ENCODE measurements at regions of chr19 and their contacts with region 1.

Region 1: GRCh38 chr19:17226002-17226933 is at the start of gene OCEL1:
- DNase-seq: peak; percentile 98
- ATAC-seq: peak; percentile 95
- H3K4me3 ChIP-seq: peak within 1 kb of the TSS; percentile 83
- H3K27ac ChIP-seq: peak within 1 kb of the TSS; percentile 59
- H3K4me1 ChIP-seq: no peaks in the 10 kb centered on the region; the same call in 1 of the 2 replicates
- H3K27me3 ChIP-seq: no peaks in the 10 kb centered on the region
- CTCF ChIP-seq: no peak
- total RNA-seq, gene OCEL1: 5.6 and 9.4 TPM in 2 replicates

Region 2: DNA sequence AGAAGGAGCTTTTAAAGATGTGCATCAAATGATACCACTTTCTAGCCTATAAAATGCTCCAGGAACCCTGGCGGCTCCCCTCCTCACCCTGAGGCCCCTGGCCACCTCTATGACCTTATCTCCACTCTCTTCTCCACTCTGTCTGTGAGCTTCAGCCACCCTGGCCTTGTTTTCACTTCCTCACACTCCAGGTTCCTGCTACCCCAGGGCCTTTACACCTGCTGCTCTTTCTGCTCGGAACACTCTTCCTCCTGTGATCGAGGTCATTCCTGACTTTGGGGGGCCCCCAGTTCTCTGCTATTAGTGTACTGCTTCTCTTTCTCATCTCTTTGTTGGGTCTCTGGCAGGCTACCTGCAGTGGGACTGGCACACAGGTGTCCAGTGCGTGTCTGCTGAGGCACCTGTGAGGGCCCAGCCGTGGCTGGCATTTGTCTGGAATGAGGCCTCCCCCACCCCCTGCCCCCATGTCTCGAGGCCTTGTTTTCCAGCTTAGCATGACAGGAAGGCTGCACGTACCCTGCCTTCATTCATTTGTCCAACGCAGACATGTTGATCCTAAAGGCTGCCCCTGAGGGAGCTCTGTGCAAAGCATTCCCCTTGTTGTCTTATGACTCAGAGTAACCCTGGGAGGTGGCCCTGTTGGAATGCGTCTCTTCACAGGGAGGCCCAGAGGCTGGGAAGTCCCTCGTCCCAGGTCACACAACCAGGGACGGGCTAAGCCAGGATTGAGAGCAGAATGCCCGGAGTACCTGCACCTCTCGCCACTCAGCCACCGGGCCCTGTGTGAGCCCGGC is 85.4 kb after region 1 on chr19:
- CTCF ChIA-PET with region 1: no interaction called
- POLR2A ChIA-PET with region 1: interaction called, 12 read pairs
- intact Hi-C with region 1: no loop called
- DNase-seq: peak; percentile 82
- ATAC-seq: peak; percentile 61
- H3K4me3 ChIP-seq: peak overlapping the region; percentile 40; the same call in 1 of the 2 replicates
- H3K27ac ChIP-seq: peak overlapping the region; percentile 76
- H3K4me1 ChIP-seq: peaks cover 37% of the 10 kb centered on the region
- H3K27me3 ChIP-seq: no peaks in the 10 kb centered on the region
- CTCF ChIP-seq: no peak

Region 3: DNA sequence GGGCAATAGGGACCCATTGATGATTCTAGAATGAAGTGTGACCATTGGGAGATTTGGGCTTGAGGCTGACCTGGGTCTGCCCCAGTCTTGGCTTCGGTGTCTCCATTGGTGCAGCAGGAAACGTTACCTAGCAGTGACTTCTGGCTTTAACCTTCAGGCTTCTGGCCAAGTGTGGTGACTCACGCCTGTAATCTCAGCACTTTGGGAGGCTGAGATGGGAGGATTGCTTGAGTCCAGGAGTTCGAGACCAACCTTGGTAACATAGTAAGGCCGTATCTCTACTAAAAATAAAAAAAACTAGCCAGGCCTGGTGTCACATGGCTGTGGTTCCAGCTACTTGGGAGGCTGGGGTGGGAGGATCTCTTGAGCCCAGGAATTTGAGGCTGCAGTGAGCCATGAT is 532.3 kb after region 1 on chr19:
- CTCF ChIA-PET with region 1: no interaction called
- POLR2A ChIA-PET with region 1: no interaction called
- intact Hi-C with region 1: no loop called
- DNase-seq: no peak
- ATAC-seq: no peak
- H3K4me3 ChIP-seq: no peak overlapping the region
- H3K27ac ChIP-seq: no peak overlapping the region
- H3K4me1 ChIP-seq: peaks cover 3% of the 10 kb centered on the region; the same call in 1 of the 2 replicates
- H3K27me3 ChIP-seq: no peaks in the 10 kb centered on the region
- CTCF ChIP-seq: no peak